ENCODE measurements at regions of chr1 and their contacts with region 1.

Region 1: DNA sequence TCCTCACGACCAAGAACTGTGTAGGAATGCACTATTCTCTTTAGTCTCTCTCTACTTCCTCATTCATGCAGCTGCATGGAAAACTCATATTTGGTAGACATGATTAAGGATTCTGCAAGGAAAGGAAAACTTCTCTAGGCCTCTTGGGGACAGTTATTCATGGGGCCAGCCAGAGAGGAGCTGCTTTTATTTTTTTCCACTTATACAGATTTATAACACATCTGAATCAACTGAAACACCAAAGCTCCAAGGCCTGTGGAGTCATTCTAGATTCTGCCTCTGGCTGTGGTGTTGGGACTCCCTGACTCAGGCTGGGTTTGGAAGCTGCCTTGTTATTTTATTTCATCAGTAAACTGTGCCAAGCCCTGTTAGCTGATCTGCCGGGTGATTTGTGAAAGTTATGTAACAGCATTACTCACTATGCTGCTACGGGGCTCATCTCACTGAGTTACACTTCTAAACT is 83.9 kb upstream of the EDEM3 start:
- DNase-seq: peak; percentile 98
- H3K4me3 Mint-ChIP-seq: no peak overlapping the region
- H3K27ac Mint-ChIP-seq: no peak overlapping the region
- H3K4me1 Mint-ChIP-seq: peaks cover 16% of the 10 kb centered on the region
- H3K27me3 Mint-ChIP-seq: peaks cover 90% of the 10 kb centered on the region
- CTCF ChIP-seq: no peak

Region 2: DNA sequence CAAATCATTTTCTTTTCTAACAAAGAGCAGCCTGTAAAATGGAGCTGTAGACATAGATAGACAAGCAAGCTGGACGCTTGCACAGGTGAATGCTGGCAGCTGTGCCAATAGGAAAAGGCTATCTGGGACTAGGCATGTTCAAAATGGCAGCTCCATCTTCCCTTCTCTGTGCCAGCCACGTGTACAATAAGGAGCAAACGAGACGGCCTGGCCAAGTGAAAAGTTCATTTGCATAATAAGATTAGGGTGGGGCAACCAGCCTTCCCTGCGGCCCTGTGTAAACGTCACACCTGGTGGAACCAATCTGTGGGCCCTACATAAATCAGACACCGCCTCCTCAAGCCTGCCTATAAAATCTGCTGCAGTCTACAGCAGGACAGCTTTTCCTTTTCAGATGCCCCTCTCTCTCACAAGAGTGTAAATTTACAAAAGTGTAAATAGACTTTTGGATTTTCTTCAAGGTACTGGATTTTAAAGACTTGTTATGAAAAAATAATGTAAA is 67.3 kb before region 1 on chr1:
- CTCF ChIA-PET with region 1: no interaction called
- POLR2A ChIA-PET with region 1: no interaction called
- intact Hi-C with region 1: no loop called
- DNase-seq: no peak
- H3K4me3 Mint-ChIP-seq: no peak overlapping the region
- H3K27ac Mint-ChIP-seq: no peak overlapping the region
- H3K4me1 Mint-ChIP-seq: no peaks in the 10 kb centered on the region
- H3K27me3 Mint-ChIP-seq: peaks cover 34% of the 10 kb centered on the region
- CTCF ChIP-seq: no peak

Region 3: DNA sequence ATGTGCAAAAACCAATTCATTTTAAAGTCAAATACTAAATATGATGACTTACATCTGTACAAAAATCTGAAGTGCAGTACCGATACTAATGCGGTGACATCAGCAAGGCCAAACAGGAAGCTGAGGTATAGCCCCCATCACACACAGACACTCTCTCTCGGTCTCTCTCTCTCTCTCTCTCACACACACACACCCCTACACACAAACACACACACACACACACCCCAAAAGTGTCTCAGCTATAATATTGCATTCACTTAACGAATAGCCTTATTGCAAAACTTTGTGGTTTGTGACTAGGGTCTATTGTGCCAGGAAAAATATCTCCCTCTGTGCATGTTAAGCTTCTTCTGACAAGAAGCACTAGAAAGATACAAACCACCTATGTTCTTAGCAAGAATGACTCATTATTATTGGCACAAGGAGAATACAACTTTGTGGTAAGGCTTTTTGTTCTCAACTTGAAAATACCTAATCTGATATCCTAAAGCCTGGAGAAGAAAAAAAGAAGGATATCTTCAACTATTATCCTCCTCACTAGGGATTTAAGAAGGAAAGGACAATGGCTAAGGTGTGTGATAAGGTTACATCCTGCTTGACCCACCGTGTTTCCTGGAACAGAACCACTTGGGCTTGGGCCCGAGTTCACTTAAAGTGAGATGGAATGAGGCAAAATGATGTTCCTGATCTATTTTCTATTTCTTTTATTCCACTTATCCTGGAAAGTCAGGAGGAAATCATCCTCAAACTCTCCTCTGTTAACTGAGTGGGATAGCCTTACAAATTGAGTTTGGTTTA is 28.7 kb after region 1 on chr1:
- CTCF ChIA-PET with region 1: interaction called, 5 read pairs
- POLR2A ChIA-PET with region 1: interaction called, 8 read pairs
- intact Hi-C with region 1: loop called (anchors 5 kb)
- DNase-seq: peak; percentile 98
- H3K4me3 Mint-ChIP-seq: no peak overlapping the region
- H3K27ac Mint-ChIP-seq: no peak overlapping the region
- H3K4me1 Mint-ChIP-seq: peaks cover 8% of the 10 kb centered on the region
- H3K27me3 Mint-ChIP-seq: peaks cover 100% of the 10 kb centered on the region
- CTCF ChIP-seq: no peak

Measured in MCF 10A (cell line).